Activated naive CD4-positive, alpha-beta T cell treated with anti-CD3 and anti-CD28 coated beads for 36 hours (primary cell): ENCODE measurements at regions of chr18 and their contacts with region 1.

Region 1: GRCh38 chr18:11980555-11981382 is 538 bp upstream of the IMPA2 start:
- DNase-seq: peak; percentile 99
- H3K4me3 Mint-ChIP-seq: peak overlapping the region; percentile 86
- H3K27ac Mint-ChIP-seq: peak overlapping the region; percentile 83
- H3K4me1 Mint-ChIP-seq: peaks cover 14% of the 10 kb centered on the region
- H3K27me3 Mint-ChIP-seq: peaks cover 2% of the 10 kb centered on the region

Region 2: DNA sequence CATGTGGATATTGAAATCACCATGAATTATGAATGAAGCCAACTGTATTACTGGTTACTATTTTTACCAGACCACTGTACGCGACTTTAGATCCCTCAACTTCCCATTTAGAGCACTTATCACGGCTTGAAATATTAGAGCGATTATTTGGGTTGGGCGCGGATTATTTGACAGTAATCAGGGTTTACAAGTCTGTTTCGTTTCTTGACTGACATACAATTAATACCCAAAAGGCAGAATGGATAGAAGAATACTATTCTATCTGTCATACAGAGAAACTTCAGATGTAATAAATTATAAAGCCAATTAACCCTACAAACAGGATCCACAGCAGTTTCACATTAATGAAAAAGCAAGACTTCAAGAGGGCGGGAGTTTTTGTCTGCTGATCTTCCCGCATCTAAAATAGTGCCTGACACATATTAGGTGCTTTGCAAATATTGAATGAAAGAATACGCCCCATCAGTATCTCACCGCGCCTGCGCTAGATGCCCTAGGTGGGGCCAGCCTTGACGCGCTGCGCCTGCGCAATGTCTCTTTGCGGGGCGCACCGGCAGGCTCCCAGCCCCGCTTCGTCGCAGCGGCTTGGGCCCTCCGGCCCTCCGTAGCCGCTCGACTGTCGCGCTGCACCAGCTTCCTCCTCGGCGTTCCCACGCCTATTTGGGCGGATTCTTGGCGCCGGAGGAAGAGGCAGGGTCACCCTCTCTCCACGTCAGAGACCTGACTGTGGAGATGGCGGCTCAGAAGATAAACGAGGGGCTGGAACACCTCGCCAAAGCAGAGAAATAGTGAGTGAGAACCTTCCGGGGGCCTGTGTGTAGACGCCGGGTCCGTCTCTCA is 1455.2 kb before region 1 on chr18 and contains the start of gene NAPG:
- CTCF ChIA-PET with region 1: no interaction called
- intact Hi-C with region 1: loop called (anchors 2 kb)
- DNase-seq: peak; percentile 88
- H3K4me3 Mint-ChIP-seq: peak within 1 kb of the TSS; percentile 95
- H3K27ac Mint-ChIP-seq: peak within 1 kb of the TSS; percentile 89
- H3K4me1 Mint-ChIP-seq: peaks cover 45% of the 10 kb centered on the region
- H3K27me3 Mint-ChIP-seq: no peaks in the 10 kb centered on the region
- total RNA-seq, gene NAPG: 20.2 to 21.0 TPM

Region 3: DNA sequence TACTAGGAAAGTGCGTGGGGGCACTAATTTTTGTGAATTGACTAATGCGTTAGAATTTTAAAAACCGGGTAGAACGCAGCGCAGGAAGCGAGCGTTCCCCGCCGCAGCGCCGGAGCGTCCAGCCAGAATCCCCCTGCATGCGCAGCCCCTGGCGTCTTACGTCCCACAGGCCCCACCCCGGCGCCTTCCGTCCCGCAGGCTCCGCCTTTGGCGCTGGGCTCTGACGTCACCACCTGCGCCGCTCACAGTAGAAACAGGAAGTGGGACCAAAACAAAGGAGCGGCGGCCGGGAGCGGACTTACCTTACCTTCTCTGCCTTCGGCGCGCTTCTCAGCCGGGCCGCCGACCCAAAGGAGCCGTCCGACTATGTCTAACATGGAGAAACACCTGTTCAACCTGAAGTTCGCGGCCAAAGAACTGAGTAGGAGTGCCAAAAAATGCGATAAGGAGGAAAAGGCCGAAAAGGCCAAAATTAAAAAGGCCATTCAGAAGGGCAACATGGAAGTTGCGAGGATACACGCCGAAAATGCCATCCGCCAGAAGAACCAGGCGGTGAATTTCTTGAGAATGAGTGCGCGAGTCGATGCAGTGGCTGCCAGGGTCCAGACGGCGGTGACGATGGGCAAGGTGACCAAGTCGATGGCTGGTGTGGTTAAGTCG is 129.5 kb before region 1 on chr18 and contains the start of gene CHMP1B:
- CTCF ChIA-PET with region 1: no interaction called
- intact Hi-C with region 1: loop called (anchors 1 kb)
- DNase-seq: peak; percentile 98
- H3K4me3 Mint-ChIP-seq: peak within 1 kb of the TSS; percentile 100
- H3K27ac Mint-ChIP-seq: peak within 1 kb of the TSS; percentile 100
- H3K4me1 Mint-ChIP-seq: peaks cover 31% of the 10 kb centered on the region
- H3K27me3 Mint-ChIP-seq: no peaks in the 10 kb centered on the region
- total RNA-seq, gene CHMP1B: 23.2 TPM

Region 4: DNA sequence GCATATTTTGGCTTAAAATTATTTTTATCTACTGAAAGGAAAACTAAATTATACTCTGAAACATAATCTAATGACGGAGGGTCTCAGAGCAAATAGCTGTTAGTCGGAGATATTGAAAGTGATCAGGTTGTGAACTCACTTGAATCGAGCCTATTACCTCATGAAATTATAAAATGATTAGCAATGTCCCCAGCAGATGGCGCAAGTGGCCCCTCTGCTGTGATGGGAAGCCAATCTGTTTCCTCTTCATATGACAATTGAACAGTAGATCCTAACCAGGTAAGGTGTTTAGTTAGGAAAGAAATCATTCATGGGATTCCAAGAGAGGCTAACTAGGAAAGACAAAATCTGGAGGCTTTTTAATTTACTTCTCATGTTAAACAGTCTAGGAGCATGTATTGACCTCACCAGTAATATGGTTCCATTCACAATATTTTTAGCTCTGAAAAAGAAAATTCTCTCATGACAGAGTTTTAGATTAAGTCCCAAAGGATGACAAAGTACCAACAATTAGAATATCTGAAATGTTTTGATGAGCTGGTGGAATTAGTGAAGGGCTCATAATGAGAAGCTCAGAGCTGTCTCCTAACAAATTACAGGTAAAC is 42.8 kb before region 1 on chr18:
- CTCF ChIA-PET with region 1: interaction called, 27 read pairs
- intact Hi-C with region 1: no loop called
- DNase-seq: peak; percentile 86
- H3K4me3 Mint-ChIP-seq: no peak overlapping the region
- H3K27ac Mint-ChIP-seq: no peak overlapping the region
- H3K4me1 Mint-ChIP-seq: no peaks in the 10 kb centered on the region
- H3K27me3 Mint-ChIP-seq: no peaks in the 10 kb centered on the region

Region 5: GRCh38 chr18:11995445-11996189 is 14.8 kb after region 1 on chr18:
- CTCF ChIA-PET with region 1: interaction called, 28 read pairs
- intact Hi-C with region 1: no loop called
- DNase-seq: peak; percentile 74
- H3K4me3 Mint-ChIP-seq: no peak overlapping the region
- H3K27ac Mint-ChIP-seq: no peak overlapping the region
- H3K4me1 Mint-ChIP-seq: peaks cover 8% of the 10 kb centered on the region
- H3K27me3 Mint-ChIP-seq: no peaks in the 10 kb centered on the region

Region 6: DNA sequence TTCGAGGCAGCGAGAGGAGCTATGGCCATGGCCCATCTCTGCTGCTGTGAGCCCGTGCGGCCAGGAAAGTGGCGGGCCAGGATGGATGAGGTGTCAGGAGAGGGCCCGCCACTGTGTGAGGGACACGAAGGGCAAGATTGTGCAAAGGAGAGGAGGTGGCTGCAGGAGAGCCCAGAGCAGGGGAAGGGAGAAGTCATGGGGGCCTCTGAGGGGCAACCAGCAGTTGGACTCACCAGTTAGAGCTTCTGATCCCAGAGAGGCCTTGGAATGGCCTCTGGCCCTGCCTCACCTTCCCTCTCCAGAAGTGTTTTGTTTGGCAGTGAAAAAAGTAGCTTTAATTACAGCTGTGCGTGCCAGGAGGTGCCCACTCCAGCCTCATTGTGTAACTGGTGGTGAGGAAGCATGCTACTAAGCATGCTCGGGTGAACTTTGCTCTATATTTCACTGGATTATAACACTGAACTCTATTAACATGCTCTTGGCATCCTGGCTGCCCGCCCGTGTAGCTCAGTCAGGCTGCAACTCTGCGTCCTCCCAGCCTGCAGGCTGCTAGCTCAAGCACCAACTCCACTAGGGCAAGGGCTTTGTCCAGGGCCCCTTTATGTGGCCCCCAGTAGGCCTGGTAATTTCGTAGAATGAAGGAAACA is 34.8 kb after region 1 on chr18:
- CTCF ChIA-PET with region 1: no interaction called
- intact Hi-C with region 1: no loop called
- DNase-seq: no peak
- H3K4me3 Mint-ChIP-seq: no peak overlapping the region
- H3K27ac Mint-ChIP-seq: no peak overlapping the region
- H3K4me1 Mint-ChIP-seq: no peaks in the 10 kb centered on the region
- H3K27me3 Mint-ChIP-seq: no peaks in the 10 kb centered on the region

Region 7: GRCh38 chr18:12408247-12408869 is 427.6 kb after region 1 on chr18:
- CTCF ChIA-PET with region 1: no interaction called
- intact Hi-C with region 1: loop called (anchors 10 kb)
- DNase-seq: no peak
- H3K4me3 Mint-ChIP-seq: peak overlapping the region; percentile 72
- H3K27ac Mint-ChIP-seq: no peak overlapping the region
- H3K4me1 Mint-ChIP-seq: peaks cover 13% of the 10 kb centered on the region
- H3K27me3 Mint-ChIP-seq: peaks cover 38% of the 10 kb centered on the region